HCT116 (cell line): ENCODE measurements at regions of chr13 and their contacts with region 1.

Region 1: DNA sequence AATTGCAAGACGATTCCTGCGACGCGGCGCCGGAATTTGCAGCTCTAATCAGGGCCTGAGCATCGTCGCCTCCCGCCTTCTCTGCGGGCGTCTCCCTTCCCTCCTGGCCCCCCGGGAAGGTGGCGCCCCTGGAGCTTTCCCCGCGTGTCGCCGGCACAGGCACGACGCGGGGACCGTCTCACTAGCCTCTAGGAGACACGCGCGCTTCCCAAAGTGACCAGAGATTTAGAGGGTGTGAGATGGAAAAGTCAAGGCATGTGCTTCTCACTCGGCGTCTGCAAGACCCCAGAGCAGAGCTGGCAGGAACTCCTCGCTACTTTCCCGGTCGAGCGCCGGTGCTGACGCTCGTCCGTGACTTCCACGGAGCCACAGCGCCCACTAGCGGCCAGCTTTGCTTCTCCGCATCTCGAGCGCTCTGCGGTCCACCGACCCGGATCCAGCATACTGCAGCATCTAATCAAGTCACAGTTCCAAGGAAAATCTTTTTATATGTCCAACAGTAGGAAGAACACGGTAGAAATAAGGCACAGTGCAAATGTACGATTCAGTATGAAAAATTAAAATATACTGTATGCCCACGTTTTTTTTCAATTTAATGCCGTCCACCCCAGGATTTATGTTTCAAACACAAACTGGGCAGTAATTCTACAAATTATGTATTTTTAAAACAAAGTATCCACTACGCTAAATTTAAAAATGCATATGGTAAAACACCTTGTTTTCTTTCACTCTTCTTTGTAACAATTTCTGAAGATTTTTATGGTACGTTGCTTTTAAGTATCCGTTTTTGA is 977 bp upstream of the EFNB2 start:
- DNase-seq: peak; percentile 63
- ATAC-seq: peak; percentile 41
- H3K4me3 ChIP-seq: peak overlapping the region; percentile 43 to 90
- H3K27ac ChIP-seq: peak overlapping the region; percentile 43; the same call in 1 of the 2 replicates
- H3K4me1 ChIP-seq: peaks cover 8 to 24% of the 10 kb centered on the region in 2 experiments
- H3K27me3 ChIP-seq: no peaks in the 10 kb centered on the region
- CTCF ChIP-seq: peak; percentile 63 to 96 (median 93); a peak in 5 of 6 replicates
- POLR2A ChIP-seq: no peak
- RAD21 ChIP-seq: peak; percentile 89

Region 2: DNA sequence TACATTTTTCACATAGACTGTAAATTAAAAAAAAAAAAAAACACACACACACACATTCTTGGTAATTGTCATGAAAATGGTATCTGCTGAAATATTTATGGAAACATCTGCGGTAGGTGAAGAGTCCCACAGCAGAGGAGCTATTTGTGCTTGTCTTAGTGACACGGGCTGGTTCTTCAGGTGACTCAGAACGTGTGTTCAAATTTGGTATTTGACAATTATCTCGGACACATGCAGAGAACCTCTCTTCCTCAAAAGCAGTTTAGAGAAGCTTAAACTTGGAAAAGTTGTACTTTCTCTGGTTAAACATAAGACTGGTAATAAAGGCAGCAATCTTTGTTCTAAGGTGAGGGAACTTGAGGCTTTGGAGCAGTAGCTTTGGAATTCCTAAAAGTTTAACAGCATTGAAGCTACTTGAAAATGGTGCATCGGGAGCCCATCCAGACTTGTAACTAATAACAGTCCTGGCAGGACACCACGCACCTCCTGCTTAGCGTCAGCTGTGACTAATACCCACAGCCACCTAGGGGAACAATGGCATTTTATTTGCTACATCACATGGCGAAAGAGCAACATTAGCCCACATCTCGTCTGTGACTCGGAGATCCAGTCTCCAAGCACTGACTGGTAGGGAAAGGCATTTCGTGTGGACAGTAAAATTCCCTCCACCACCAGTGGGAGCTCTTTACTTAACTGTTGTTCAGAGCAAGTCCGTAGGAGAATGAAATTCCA is 1965.1 kb before region 1 on chr13:
- CTCF ChIA-PET with region 1: no interaction called
- POLR2A ChIA-PET with region 1: interaction called, 7 read pairs
- RAD21 ChIA-PET with region 1: no interaction called
- intact Hi-C with region 1: loop called (anchors 1 kb)
- DNase-seq: peak; percentile 79
- ATAC-seq: peak; percentile 97
- H3K4me3 ChIP-seq: peak overlapping the region; percentile 19 to 51; a peak in 3 of 4 replicates
- H3K27ac ChIP-seq: no peak overlapping the region
- H3K4me1 ChIP-seq: peaks cover 0 to 12% of the 10 kb centered on the region in 2 experiments; a peak in 2 of 4 replicates
- H3K27me3 ChIP-seq: no peaks in the 10 kb centered on the region
- CTCF ChIP-seq: peak; percentile 35 to 76 (median 74); a peak in 5 of 6 replicates
- POLR2A ChIP-seq: no peak
- RAD21 ChIP-seq: peak; percentile 84

Region 3: GRCh38 chr13:105202354-105202753 is 1334.1 kb before region 1 on chr13:
- CTCF ChIA-PET with region 1: no interaction called
- POLR2A ChIA-PET with region 1: no interaction called
- RAD21 ChIA-PET with region 1: no interaction called
- intact Hi-C with region 1: loop called (anchors 10 kb)
- DNase-seq: peak; percentile 19
- ATAC-seq: peak; percentile 79
- H3K4me3 ChIP-seq: no peak overlapping the region
- H3K27ac ChIP-seq: no peak overlapping the region
- H3K4me1 ChIP-seq: no peaks in the 10 kb centered on the region
- H3K27me3 ChIP-seq: no peaks in the 10 kb centered on the region
- CTCF ChIP-seq: peak; percentile 25 to 63 (median 60); a peak in 5 of 6 replicates
- POLR2A ChIP-seq: no peak
- RAD21 ChIP-seq: peak; percentile 49

Region 4: GRCh38 chr13:105773863-105774538 is 762.4 kb before region 1 on chr13:
- CTCF ChIA-PET with region 1: interaction called, 3 read pairs
- POLR2A ChIA-PET with region 1: no interaction called
- RAD21 ChIA-PET with region 1: no interaction called
- intact Hi-C with region 1: loop called (anchors 5 kb)
- DNase-seq: peak; percentile 63
- ATAC-seq: peak; percentile 79
- H3K4me3 ChIP-seq: peak overlapping the region; percentile 26 to 41
- H3K27ac ChIP-seq: peak overlapping the region; percentile 48
- H3K4me1 ChIP-seq: peaks cover 28 to 36% of the 10 kb centered on the region in 2 experiments
- H3K27me3 ChIP-seq: no peaks in the 10 kb centered on the region
- CTCF ChIP-seq: no peak
- POLR2A ChIP-seq: no peak
- RAD21 ChIP-seq: no peak

Region 5: DNA sequence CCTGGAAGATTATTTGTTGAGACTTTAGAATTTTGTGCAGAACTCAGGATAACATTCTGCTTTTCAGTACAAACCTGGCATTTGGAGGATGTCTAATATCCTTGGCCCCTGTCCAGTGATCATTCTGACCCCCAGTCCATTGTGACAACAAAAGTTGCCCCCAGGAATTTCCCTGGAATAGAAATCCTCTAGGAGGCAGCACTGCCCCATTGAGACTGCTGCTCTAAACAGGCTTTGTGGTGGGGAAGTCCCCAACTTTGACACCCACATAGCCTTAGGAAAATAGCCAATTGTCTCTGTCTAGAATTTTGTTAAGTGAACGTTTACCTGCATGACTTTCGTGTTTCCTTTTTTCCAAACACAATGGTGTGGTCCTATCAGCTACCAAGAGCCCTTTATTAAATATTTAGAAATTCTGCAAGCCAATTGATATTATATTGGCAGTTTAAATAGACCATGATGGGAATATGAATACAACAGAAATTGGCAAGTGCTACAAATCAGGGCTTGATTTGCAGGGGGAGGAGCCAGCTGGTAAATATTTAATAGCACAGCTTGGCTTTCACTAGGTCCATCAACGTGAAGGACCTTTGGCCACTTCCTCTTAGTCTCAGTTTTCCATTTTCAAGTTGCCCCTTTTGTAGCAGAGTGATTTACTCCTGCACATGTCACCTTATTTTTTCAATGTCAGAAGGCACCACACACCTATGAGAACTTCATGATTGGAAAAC is 452.7 kb before region 1 on chr13:
- CTCF ChIA-PET with region 1: no interaction called
- POLR2A ChIA-PET with region 1: no interaction called
- RAD21 ChIA-PET with region 1: interaction called in 1 of 2 experiments, 3 read pairs
- intact Hi-C with region 1: loop called (anchors 1 kb)
- DNase-seq: peak; percentile 46
- ATAC-seq: peak; percentile 78
- H3K4me3 ChIP-seq: no peak overlapping the region
- H3K27ac ChIP-seq: no peak overlapping the region
- H3K4me1 ChIP-seq: peaks cover 0 to 6% of the 10 kb centered on the region in 2 experiments; a peak in 1 of 4 replicates
- H3K27me3 ChIP-seq: no peaks in the 10 kb centered on the region
- CTCF ChIP-seq: peak; percentile 62 to 85 (median 77); a peak in 5 of 6 replicates
- POLR2A ChIP-seq: no peak
- RAD21 ChIP-seq: peak; percentile 89

Region 6: DNA sequence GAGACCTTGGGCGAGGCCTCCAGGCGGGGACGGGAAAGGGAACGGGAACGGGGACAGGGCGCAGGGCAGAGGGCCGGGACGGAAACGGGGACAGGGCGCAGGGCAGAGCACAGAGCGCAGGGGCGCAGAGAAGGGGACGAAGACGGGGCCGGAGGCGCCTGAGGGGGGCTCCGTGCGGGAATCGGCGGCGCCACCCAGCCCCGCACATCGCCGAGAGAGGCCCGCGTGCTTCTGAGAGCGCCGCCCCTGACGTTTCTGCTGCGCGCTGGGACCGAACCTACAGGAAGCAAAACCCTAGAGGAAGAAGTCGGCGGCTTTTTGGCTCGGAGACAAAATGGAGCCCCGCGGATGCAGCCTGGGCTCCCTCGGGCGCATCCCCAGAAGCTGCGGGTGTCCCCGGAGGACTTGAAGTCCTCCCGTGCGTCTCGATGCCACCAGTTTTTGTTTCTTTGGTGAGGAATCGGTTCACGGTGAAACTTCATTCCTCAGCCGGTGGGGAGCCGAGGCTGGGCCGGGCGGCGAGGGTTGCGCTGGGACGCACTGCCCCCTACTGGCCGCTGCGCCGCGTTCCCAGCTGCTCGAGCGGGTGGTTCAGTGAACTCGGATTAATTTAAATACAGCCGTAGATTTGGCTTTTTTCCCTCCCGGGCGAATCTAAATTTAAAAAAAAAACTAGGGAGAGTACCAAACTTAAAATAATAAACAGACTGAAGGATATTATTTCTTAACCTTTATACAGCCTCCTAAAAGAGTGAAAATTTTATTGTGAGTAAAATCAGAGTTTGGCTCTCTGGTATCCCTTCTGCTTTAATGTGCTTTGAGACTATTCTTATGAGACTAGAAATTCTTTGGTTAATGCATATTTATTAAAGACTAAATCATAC is 381.5 kb after region 1 on chr13:
- CTCF ChIA-PET with region 1: no interaction called
- POLR2A ChIA-PET with region 1: no interaction called
- RAD21 ChIA-PET with region 1: no interaction called
- intact Hi-C with region 1: loop called (anchors 5 kb)
- DNase-seq: peak; percentile 22
- ATAC-seq: peak; percentile 97
- H3K4me3 ChIP-seq: peak overlapping the region; percentile 50 to 60
- H3K27ac ChIP-seq: peak overlapping the region; percentile 16; the same call in 1 of the 2 replicates
- H3K4me1 ChIP-seq: peaks cover 0 to 9% of the 10 kb centered on the region in 2 experiments; a peak in 1 of 4 replicates
- H3K27me3 ChIP-seq: no peaks in the 10 kb centered on the region
- CTCF ChIP-seq: peak; percentile 45 to 93 (median 89); a peak in 5 of 6 replicates
- POLR2A ChIP-seq: no peak
- RAD21 ChIP-seq: peak; percentile 77

Region 7: GRCh38 chr13:107157271-107157670 is 620.8 kb after region 1 on chr13:
- CTCF ChIA-PET with region 1: no interaction called
- POLR2A ChIA-PET with region 1: no interaction called
- RAD21 ChIA-PET with region 1: no interaction called
- intact Hi-C with region 1: no loop called
- DNase-seq: no peak
- ATAC-seq: no peak
- H3K4me3 ChIP-seq: no peak overlapping the region
- H3K27ac ChIP-seq: no peak overlapping the region
- H3K4me1 ChIP-seq: no peaks in the 10 kb centered on the region
- H3K27me3 ChIP-seq: no peaks in the 10 kb centered on the region
- CTCF ChIP-seq: no peak
- POLR2A ChIP-seq: no peak
- RAD21 ChIP-seq: no peak